ENCODE measurements at regions of chr5 and their contacts with region 1.

Region 1: GRCh38 chr5:108727651-108728565 is 19.8 kb upstream of the FER start:
- DNase-seq: peak; percentile 73 to 98 (median 80)

Region 2: GRCh38 chr5:108748401-108749127 is 20.7 kb after region 1 on chr5:
- intact Hi-C with region 1: loop called (anchors 2 kb)
- DNase-seq: peak; percentile 99 to 100 (median 100)

Region 3: DNA sequence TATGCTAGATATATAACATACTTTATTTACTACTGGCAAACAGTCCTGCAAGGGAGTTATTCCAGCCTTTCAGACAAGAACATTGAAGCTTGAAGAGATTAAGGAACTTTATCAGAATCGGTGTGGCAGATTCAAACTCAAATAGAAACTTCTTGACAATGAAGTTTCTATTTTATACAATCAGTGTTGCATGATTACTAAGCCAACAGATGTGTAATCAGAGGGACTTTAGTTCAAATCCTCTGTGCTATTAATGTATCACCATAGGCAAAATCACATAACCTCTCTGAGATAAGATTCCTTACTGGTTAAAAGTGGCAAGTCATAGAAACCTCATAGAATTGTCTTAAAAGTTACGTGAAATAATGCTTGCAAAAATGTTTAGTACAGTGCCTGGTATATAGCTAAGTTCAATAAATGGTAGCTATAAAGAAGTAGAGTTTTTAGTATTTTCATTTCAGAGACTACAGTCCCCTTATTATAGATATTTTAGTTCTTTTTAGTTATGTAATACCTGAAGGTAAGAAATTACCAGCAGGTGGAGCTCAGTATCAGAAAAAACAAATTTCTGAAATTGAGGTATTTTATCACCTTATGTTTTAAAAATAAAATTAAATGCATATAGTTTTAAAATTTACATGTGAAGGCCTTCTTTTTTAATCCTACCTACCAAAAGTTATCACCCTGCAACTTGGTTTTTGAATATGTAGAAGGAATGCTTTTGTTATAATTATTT is 191.9 kb after region 1 on chr5:
- intact Hi-C with region 1: no loop called
- DNase-seq: no peak